GM23248 (cell line): ENCODE measurements at regions of chr3 and their contacts with region 1.

Region 1: DNA sequence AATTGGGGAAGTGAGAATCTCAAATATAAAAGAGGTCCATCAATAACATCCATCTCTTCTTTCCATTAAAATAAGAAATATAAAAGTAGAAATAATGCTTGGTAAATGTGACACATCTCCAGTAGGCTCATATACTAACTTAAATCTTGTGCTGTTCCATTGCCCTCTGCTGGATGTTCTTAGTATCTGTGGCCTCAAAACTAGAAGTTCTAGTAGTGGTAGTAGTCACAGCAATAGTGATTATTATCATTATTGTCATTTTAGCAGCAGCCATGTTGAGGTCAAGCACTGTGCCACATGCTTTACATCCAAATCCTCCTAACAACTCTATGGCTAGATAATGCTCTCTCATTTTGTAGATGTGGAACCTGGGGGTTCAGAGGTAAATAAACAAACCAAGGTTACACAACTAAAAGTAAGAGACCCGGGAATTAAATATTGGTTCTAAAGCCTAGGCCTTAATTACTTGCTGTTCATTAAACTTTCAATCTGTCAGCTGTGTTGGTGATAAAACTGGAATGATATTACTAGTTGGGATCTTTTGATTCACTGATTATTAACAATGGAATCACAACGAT is 20.2 kb upstream of the BTLA start:
- DNase-seq: peak; percentile 79
- H3K4me3 ChIP-seq: no peak overlapping the region
- H3K27ac ChIP-seq: no peak overlapping the region
- H3K4me1 ChIP-seq: no peaks in the 10 kb centered on the region
- H3K27me3 ChIP-seq: no peaks in the 10 kb centered on the region

Region 2: GRCh38 chr3:112136959-112137693 is 382.4 kb before region 1 on chr3:
- in situ Hi-C with region 1: loop called (anchors 25 kb)
- DNase-seq: peak; percentile 43
- H3K4me3 ChIP-seq: no peak overlapping the region
- H3K27ac ChIP-seq: no peak overlapping the region
- H3K4me1 ChIP-seq: no peaks in the 10 kb centered on the region
- H3K27me3 ChIP-seq: no peaks in the 10 kb centered on the region; the same call in 1 of the 2 replicates

Region 3: DNA sequence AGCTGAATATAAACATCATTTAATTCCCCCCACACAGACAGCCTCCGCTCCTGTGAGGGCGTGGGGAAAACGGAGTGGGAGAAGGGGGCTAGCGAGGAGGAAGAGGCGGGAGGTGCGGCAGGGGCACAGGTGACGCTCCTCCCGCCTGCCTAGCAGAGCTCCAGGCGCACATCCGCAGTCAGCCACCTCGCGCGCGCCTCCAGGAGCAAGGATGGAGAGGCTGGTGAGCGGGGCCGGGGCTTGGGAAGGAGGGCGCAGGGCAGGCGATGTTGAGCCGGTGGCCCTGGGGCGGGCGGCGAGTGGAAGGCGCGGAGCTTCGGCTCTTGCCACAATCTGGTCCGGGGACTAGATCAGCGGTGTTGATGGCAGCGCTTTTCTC is 186.5 kb before region 1 on chr3 and contains the start of gene CD200:
- in situ Hi-C with region 1: loop called (anchors 10 kb)
- DNase-seq: peak; percentile 46
- H3K4me3 ChIP-seq: peak within 1 kb of the TSS; percentile 63
- H3K27ac ChIP-seq: no peak within 1 kb of the TSS
- H3K4me1 ChIP-seq: peaks cover 3% of the 10 kb centered on the region; the same call in 1 of the 2 replicates
- H3K27me3 ChIP-seq: peaks cover 37% of the 10 kb centered on the region
- total RNA-seq, gene CD200: 0.76 TPM in 1 of 2 replicates, not detected in the other